ENCODE measurements at regions of chr20 and their contacts with region 1.

Region 1: GRCh38 chr20:56202493-56203077 is 45.9 kb upstream of the MC3R start:
- DNase-seq: peak; percentile 63
- H3K4me3 Mint-ChIP-seq: no peak overlapping the region
- H3K27ac Mint-ChIP-seq: no peak overlapping the region
- H3K4me1 Mint-ChIP-seq: no peaks in the 10 kb centered on the region
- H3K27me3 Mint-ChIP-seq: no peaks in the 10 kb centered on the region
- CTCF ChIP-seq: peak; percentile 73

Region 2: GRCh38 chr20:56187534-56188198 is 14.9 kb before region 1 on chr20:
- CTCF ChIA-PET with region 1: interaction called, 38 read pairs
- POLR2A ChIA-PET with region 1: interaction called, 3 read pairs
- intact Hi-C with region 1: no loop called
- DNase-seq: peak; percentile 62
- H3K4me3 Mint-ChIP-seq: no peak overlapping the region
- H3K27ac Mint-ChIP-seq: no peak overlapping the region
- H3K4me1 Mint-ChIP-seq: peaks cover 6% of the 10 kb centered on the region
- H3K27me3 Mint-ChIP-seq: no peaks in the 10 kb centered on the region
- CTCF ChIP-seq: peak; percentile 48

Region 3: GRCh38 chr20:56222196-56222595 is 19.6 kb after region 1 on chr20:
- CTCF ChIA-PET with region 1: interaction called, 89 read pairs
- POLR2A ChIA-PET with region 1: no interaction called
- intact Hi-C with region 1: no loop called
- DNase-seq: peak; percentile 55
- H3K4me3 Mint-ChIP-seq: peak overlapping the region; percentile 50
- H3K27ac Mint-ChIP-seq: peak overlapping the region; percentile 92
- H3K4me1 Mint-ChIP-seq: peaks cover 50% of the 10 kb centered on the region
- H3K27me3 Mint-ChIP-seq: no peaks in the 10 kb centered on the region
- CTCF ChIP-seq: no peak

Region 4: GRCh38 chr20:56229812-56230211 is 27.2 kb after region 1 on chr20:
- CTCF ChIA-PET with region 1: interaction called, 19 read pairs
- POLR2A ChIA-PET with region 1: no interaction called
- intact Hi-C with region 1: no loop called
- DNase-seq: peak; percentile 27
- H3K4me3 Mint-ChIP-seq: peak overlapping the region; percentile 19
- H3K27ac Mint-ChIP-seq: peak overlapping the region; percentile 23
- H3K4me1 Mint-ChIP-seq: peaks cover 29% of the 10 kb centered on the region
- H3K27me3 Mint-ChIP-seq: no peaks in the 10 kb centered on the region
- CTCF ChIP-seq: no peak

Region 5: DNA sequence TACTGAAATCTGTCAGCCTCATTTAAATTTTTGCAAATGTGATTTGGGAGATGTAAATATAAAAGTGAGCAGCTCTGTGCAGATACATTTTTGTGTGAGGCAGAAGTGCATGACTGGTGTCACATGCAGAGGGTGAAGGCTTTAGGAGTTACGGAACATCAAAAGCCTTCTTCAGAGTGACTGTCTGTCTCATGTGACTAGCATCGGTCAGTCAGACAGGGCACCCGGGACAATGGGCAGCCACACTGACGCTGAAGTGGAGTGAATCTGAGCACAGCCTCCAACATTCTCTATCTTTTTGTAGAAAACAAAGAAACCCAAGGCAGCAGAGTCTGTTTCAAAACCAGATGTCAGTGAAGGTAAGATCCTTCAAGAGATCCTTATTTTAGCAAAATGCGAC is 314.0 kb after region 1 on chr20:
- CTCF ChIA-PET with region 1: interaction called, 4 read pairs
- POLR2A ChIA-PET with region 1: no interaction called
- intact Hi-C with region 1: loop called (anchors 1 kb)
- DNase-seq: no peak
- H3K4me3 Mint-ChIP-seq: no peak overlapping the region
- H3K27ac Mint-ChIP-seq: no peak overlapping the region
- H3K4me1 Mint-ChIP-seq: no peaks in the 10 kb centered on the region
- H3K27me3 Mint-ChIP-seq: no peaks in the 10 kb centered on the region
- CTCF ChIP-seq: no peak

Region 6: GRCh38 chr20:57133926-57134650 is 931.5 kb after region 1 on chr20:
- CTCF ChIA-PET with region 1: no interaction called
- POLR2A ChIA-PET with region 1: no interaction called
- intact Hi-C with region 1: no loop called
- DNase-seq: no peak
- H3K4me3 Mint-ChIP-seq: no peak overlapping the region
- H3K27ac Mint-ChIP-seq: no peak overlapping the region
- H3K4me1 Mint-ChIP-seq: peaks cover 6% of the 10 kb centered on the region
- H3K27me3 Mint-ChIP-seq: peaks cover 58% of the 10 kb centered on the region
- CTCF ChIP-seq: no peak